Posterior vena cava (tissue), 2 donors: ENCODE measurements at regions of chr12 and their contacts with region 1.

Region 1: DNA sequence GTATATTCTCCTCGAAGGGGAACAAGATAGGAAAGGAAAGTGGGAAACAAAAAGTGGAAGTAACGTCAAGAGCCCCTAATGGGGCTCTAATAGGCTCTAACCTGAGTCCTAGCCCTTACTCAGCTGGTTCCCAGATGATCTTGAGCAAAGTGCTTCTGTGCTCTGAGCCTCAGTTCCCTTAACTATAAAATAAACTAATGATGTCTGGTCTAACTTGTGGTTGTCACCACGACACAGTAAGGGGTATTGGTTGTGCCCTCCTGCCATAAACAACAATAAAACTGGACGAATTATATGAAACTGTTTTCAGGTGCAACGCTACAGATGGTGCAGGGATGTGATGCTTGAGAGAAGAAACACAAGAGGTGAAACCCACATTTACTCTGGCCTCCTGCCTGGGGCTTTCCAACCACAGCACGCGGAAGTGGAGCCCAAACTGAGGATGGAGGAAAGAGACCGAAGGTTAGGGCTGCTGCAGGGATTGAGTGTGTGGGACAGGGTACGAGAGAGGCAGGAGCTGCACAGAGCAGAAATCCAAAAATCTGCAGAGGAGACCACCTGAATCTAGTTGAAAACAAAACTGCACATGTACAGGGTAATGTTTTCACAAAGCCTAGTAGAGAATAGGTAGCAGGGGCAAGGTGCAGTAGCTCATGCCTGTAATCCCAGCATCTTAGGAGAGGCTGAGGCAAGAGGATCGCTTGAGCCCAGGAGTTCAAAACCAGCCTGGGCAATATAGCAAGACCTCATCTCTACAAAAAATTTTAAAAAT is 45.6 kb upstream of the BCL2L14 start:
- DNase-seq: no peak

Region 2: GRCh38 chr12:11595080-11595479 is 430.0 kb before region 1 on chr12:
- intact Hi-C with region 1: loop called in 1 of 2 experiments (anchors 5 kb)
- DNase-seq: no peak

Region 3: DNA sequence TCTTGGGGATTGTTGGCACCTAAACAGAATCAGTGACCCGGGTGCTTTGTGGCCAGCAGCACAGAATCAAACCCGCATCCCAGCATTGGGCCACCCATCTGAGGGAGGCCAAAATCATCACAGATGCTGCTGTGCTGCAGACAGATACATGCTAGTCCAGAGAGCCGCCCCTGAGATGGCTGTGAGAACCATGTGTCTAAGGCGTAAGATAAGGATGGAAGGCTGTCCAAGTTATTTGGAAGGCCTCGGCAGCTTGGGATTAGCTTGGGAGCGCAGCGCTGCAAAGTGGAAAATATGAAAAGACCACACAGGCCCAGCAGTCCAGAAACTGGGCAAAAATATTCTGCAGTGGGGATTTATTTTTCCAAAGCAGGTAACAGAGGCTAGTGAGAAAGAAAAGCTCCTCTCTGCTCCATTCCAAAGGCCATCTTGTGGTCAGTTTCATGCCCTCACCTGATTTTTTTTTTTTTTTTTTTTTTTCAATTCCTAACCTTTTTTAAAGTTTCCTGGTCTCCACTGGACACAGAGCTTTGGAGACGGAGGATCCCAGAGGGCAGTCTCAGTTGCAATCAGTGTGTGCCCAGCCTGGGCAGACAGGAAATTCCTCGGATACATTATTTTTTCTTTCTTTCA is 133.2 kb before region 1 on chr12:
- intact Hi-C with region 1: loop called in 1 of 2 experiments (anchors 10 kb)
- DNase-seq: peak; percentile 87